ENCODE measurements at regions of chr6 and their contacts with region 1.

Region 1: DNA sequence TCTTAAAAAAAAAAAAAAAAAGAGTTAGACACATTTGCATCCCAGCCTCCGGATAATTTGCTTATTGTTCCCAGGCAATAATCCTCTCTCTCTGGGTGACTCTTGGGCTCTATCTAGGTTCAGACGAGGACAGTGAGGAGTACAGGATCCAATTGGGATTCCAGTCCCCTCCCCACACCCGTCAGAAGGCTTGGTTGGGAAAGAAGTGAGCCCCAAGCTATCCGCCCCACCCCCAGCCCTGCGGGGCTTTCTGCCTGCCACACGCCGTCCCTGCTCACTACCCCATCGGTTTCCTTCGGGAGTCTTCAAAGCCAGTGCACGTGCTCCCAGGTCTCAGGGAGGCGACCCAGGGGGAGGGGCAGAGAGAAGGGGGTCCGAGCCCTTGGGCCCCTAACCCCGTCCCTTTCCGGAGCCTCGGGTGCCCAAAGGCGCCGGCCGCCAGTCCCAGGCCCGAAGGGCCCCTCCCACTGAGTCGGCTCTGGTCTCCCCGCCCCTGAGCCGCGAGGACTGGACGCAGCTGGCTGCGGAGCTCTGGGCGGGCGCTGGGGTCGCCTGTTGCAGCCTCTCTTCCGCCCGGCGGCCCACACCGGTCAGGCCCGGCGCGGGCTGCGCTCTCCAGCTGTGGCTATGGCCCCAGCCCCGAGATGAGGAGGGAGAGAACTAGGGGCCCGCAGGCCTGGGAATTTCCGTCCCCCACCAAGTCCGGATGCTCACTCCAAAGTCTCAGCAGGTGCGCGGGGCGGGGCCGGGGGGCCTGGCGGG is 2.5 kb downstream of the MYMX start:
- DNase-seq: peak; percentile 87 to 90
- ATAC-seq: peak; percentile 33 to 51 (median 42)
- H3K4me3 ChIP-seq: peak overlapping the region; percentile 61
- H3K27ac ChIP-seq: peak overlapping the region; percentile 87
- H3K4me1 ChIP-seq: peaks cover 45% of the 10 kb centered on the region
- H3K27me3 ChIP-seq: no peaks in the 10 kb centered on the region
- CTCF ChIP-seq: no peak

Region 2: GRCh38 chr6:44135875-44136274 is 83.4 kb before region 1 on chr6:
- intact Hi-C with region 1: no loop called
- DNase-seq: no peak
- ATAC-seq: no peak
- H3K4me3 ChIP-seq: no peak overlapping the region
- H3K27ac ChIP-seq: no peak overlapping the region
- H3K4me1 ChIP-seq: peaks cover 15% of the 10 kb centered on the region
- H3K27me3 ChIP-seq: no peaks in the 10 kb centered on the region
- CTCF ChIP-seq: no peak

Region 3: GRCh38 chr6:44180886-44181285 is 38.3 kb before region 1 on chr6:
- intact Hi-C with region 1: loop called in 1 of 2 experiments (anchors 5 kb)
- DNase-seq: no peak
- ATAC-seq: peak in 1 of 4 donors; percentile 32
- H3K4me3 ChIP-seq: no peak overlapping the region
- H3K27ac ChIP-seq: no peak overlapping the region
- H3K4me1 ChIP-seq: peaks cover 4% of the 10 kb centered on the region
- H3K27me3 ChIP-seq: no peaks in the 10 kb centered on the region
- CTCF ChIP-seq: no peak

Measured in psoas muscle (tissue), 8 donors.